ENCODE measurements at regions of chr3 and their contacts with region 1.

Region 1: GRCh38 chr3:24680214-24680967 is 185.7 kb upstream of the THRB start:
- DNase-seq: peak in 1 of 2 donors; percentile 33
- ATAC-seq: peak; percentile 53 to 70
- H3K4me3 ChIP-seq: no peak overlapping the region
- H3K27ac ChIP-seq: no peak overlapping the region
- H3K4me1 ChIP-seq: peaks cover 12 to 15% of the 10 kb centered on the region in 2 donors
- H3K27me3 ChIP-seq: no peaks in the 10 kb centered on the region
- CTCF ChIP-seq: peak; percentile 36 to 81 (median 57)
- POLR2A ChIP-seq: no peak

Region 2: GRCh38 chr3:23888617-23889228 is 791.7 kb before region 1 on chr3:
- in situ Hi-C with region 1: loop called in 1 of 4 experiments (anchors 25 kb)
- intact Hi-C with region 1: loop called (anchors 5 kb)
- DNase-seq: no peak
- ATAC-seq: no peak
- H3K4me3 ChIP-seq: no peak overlapping the region
- H3K27ac ChIP-seq: peak overlapping the region; percentile 22 to 62 (median 40)
- H3K4me1 ChIP-seq: peaks cover 27 to 32% of the 10 kb centered on the region in 2 donors
- H3K27me3 ChIP-seq: no peaks in the 10 kb centered on the region
- CTCF ChIP-seq: peak; percentile 68 to 93 (median 81)
- POLR2A ChIP-seq: no peak

Region 3: DNA sequence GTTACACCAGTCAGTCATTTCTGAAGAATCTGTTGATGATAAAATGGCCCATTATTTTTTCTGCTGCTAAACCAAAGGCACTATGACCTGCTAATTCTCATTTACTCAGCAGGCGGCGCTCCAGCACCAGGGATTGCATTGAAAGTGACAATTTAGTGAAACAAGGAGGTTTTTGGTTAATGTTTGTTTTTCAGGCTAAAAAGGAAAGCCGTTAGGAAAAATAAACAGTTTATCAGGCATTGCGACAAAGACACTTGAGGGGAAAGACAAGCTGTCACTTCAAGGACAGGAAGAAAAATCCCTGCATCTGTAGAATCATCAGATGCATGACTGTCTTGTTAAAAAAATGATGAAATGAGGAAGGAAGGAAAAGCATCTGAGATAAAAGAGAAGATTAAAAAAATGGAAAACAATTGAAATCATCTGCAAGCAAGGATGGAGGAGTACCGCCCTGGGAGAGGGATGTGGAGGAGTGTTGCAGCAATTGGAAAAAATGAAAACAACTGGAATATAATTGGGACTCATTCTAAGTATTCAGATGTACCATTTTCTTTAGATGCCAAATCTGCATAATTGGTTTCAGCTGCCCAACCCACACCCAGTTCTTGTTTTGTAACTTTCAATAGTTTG is 681.3 kb before region 1 on chr3:
- in situ Hi-C with region 1: loop called in 3 of 4 experiments (anchors 10 to 25 kb)
- intact Hi-C with region 1: loop called (anchors 1 kb)
- DNase-seq: peak; percentile 23 to 37
- ATAC-seq: no peak
- H3K4me3 ChIP-seq: no peak overlapping the region
- H3K27ac ChIP-seq: no peak overlapping the region
- H3K4me1 ChIP-seq: peaks cover 0 to 9% of the 10 kb centered on the region in 2 donors
- H3K27me3 ChIP-seq: no peaks in the 10 kb centered on the region
- CTCF ChIP-seq: peak; percentile 82 to 97 (median 84)
- POLR2A ChIP-seq: no peak

Region 4: DNA sequence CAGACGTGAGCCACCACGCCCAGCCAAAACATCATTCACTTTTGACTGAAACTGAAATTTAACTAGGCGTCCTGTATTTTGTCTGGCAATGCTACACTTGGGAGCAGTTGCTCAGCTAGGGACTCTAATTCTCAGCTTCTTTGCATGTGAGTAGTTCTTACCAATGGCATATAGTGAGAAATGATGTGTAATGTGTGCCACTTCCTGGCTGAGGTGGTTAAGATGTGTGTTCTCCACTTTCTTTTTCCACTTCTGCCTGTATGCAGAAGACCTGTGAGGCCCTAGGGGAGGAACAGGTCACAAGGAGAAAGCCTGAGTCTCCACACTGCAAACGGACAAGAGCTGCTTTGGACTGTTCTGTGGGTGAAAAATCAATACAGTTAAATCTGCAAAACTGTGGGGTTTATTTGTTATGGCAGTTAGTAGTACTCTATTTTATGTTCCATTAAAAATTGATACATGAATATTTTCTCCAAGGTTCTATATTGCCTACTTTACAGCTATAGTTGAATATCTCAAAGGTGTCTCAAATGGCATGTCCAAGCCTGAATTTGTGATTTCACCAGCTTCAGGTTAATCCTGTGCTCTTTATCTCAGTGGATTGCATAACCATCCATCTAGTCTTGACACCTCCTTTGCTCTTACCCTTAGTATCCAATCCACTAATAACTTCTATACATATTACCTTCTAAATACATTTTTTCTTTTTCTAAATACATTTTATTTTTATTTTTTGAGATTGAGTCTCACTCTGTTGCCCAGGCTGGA is 676.0 kb before region 1 on chr3:
- in situ Hi-C with region 1: loop called (anchors 5 to 25 kb)
- intact Hi-C with region 1: loop called (anchors 1 kb)
- DNase-seq: no peak
- ATAC-seq: no peak
- H3K4me3 ChIP-seq: no peak overlapping the region
- H3K27ac ChIP-seq: no peak overlapping the region
- H3K4me1 ChIP-seq: peaks cover 0 to under 1% of the 10 kb centered on the region in 2 donors
- H3K27me3 ChIP-seq: no peaks in the 10 kb centered on the region
- CTCF ChIP-seq: no peak
- POLR2A ChIP-seq: no peak

Region 5: GRCh38 chr3:24069045-24069444 is 611.3 kb before region 1 on chr3:
- in situ Hi-C with region 1: no loop called
- intact Hi-C with region 1: loop called (anchors 5 kb)
- DNase-seq: peak in 1 of 2 donors; percentile 23
- ATAC-seq: no peak
- H3K4me3 ChIP-seq: no peak overlapping the region
- H3K27ac ChIP-seq: no peak overlapping the region
- H3K4me1 ChIP-seq: peaks cover 4 to 6% of the 10 kb centered on the region in 2 donors
- H3K27me3 ChIP-seq: no peaks in the 10 kb centered on the region
- CTCF ChIP-seq: peak in 4 of 5 experiments; percentile 28 to 44 (median 34)
- POLR2A ChIP-seq: no peak

Region 6: GRCh38 chr3:24185738-24186384 is 494.5 kb before region 1 on chr3:
- in situ Hi-C with region 1: no loop called
- intact Hi-C with region 1: loop called (anchors 10 kb)
- DNase-seq: peak; percentile 9 to 31
- ATAC-seq: peak; percentile 66 to 80
- H3K4me3 ChIP-seq: no peak overlapping the region
- H3K27ac ChIP-seq: peak overlapping the region; percentile 47 to 65 (median 56)
- H3K4me1 ChIP-seq: peaks cover 15 to 25% of the 10 kb centered on the region in 2 donors
- H3K27me3 ChIP-seq: no peaks in the 10 kb centered on the region
- CTCF ChIP-seq: peak; percentile 54 to 78 (median 63)
- POLR2A ChIP-seq: no peak

Region 7: DNA sequence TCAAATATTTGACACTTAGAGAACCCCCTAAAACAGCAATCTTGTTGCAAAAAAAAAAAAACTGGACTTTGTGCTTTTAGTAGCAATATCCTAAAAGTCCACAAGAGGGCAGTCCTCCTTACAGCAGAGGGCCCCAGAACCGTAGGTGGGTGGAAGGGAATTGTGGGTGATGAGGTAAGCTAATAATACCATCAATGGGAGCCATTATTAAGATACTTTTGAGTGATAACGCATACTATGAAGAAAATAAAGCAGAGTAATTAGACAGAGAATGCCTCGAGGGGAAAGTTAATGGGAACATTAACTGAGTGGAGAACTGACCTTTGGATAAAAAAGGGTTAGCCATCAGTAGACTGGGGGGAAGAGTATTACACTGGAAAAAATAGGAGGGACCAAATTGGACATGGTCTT is 415.6 kb before region 1 on chr3:
- in situ Hi-C with region 1: loop called in 2 of 4 experiments (anchors 25 kb)
- intact Hi-C with region 1: loop called (anchors 2 kb)
- DNase-seq: no peak
- ATAC-seq: no peak
- H3K4me3 ChIP-seq: no peak overlapping the region
- H3K27ac ChIP-seq: no peak overlapping the region
- H3K4me1 ChIP-seq: peaks cover 22 to 57% of the 10 kb centered on the region in 2 donors
- H3K27me3 ChIP-seq: no peaks in the 10 kb centered on the region
- CTCF ChIP-seq: peak; percentile 64 to 79 (median 75)
- POLR2A ChIP-seq: no peak

Region 8: DNA sequence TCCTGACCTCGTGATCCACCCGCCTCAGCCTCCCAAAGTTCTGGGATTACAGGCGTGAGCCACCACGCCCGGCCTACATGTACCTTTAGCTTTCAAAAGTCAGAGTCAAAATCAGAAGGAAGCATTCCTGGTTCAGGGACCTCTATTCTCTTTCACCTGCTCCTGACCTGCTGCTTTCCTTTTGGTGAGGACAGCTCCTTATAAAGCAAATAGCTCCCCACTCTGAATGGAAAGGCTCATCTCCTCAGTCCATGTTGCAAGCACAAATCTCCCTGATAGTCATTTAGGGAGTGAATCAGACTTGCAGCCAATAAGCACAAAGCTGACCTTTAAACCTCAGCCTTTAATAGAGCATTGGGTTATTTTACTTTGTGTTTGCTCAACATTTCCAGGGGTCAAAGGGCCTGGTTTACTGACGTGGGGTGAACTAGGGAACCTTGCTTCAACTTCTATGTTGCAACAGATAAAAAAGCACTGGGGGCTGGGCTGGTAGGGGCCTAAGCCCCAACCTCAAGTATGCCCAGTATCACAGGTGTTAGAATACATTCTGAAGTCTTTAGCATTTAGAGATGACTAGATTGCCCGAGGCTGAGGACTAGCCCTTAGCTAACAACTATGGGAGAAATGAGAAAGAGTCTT is 228.8 kb before region 1 on chr3:
- in situ Hi-C with region 1: no loop called
- intact Hi-C with region 1: no loop called
- DNase-seq: no peak
- ATAC-seq: peak in 1 of 2 donors; percentile 13
- H3K4me3 ChIP-seq: no peak overlapping the region
- H3K27ac ChIP-seq: peak overlapping the region in 3 of 4 donors; percentile 34 to 75 (median 50)
- H3K4me1 ChIP-seq: peaks cover 41 to 43% of the 10 kb centered on the region in 2 donors
- H3K27me3 ChIP-seq: no peaks in the 10 kb centered on the region
- CTCF ChIP-seq: no peak
- POLR2A ChIP-seq: no peak

Measured in gastrocnemius medialis (tissue), 4 donors.